ENCODE measurements at regions of chr4 and their contacts with region 1.

Region 1: DNA sequence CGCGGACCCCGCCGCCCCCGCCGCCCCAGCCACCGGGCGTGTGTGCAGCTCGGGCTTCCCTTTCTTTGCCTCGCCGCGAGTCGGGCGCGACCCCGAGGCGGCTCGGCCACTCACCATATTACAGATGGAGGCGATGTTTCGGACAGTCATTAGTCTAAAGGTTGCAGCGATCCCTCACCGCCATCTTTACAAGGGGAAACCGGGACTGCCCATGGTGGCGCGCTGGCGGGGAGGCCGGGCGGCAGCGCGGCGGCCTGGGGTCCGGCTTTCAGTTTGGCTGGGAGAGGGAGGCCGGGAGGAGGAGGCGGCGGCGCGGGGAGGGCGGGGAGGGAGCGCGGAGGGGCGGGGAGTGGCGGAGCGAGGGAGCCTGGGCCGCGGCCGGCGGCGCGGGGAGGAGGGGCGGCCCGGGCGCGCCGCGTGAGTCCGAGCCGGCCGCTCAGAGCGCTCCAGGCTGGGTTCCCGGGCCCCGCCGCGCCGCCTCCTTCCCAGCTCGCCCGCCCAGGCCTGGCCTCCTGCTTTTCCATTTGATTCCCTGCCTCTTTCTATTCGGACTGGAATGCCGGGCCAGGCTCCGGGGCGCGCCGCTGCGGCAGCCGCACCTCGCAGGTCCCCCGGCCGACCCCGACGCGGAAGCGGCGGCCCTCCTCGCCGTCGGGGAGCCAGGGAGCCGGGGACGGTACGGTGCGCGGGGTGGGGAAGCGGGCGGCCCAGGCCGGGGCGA is at the start of gene USP46:
- DNase-seq: no peak
- ATAC-seq: peak; percentile 91
- H3K4me3 ChIP-seq: peak within 1 kb of the TSS; percentile 87
- H3K27ac ChIP-seq: peak within 1 kb of the TSS; percentile 81
- H3K4me1 ChIP-seq: peaks cover 6% of the 10 kb centered on the region; the same call in 1 of the 2 replicates
- H3K27me3 ChIP-seq: no peaks in the 10 kb centered on the region
- CTCF ChIP-seq: no peak
- EP300 ChIP-seq: no peak
- POLR2A ChIP-seq: peak; percentile 84
- RAD21 ChIP-seq: no peak
- polyA plus RNA-seq, gene USP46: 5.3 TPM

Region 2: DNA sequence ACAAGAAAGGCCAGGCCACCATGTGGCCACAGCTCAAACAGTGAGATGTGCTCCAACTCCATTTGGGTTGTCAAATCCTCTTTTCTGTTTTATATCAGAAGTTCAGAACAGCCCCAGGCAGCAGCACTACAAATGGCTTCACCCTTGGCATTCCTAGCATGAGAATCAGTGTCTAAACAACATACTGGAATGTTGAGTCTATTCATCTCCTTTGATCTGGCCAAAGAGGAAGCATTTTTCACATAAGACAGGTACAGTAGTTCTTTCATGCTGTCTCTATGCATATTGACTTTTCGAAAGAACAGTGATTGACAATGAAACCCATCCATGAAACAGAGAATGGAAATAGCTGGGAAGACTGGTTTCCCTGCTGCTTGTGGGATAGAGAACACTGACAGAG is 289.5 kb before region 1 on chr4:
- CTCF ChIA-PET with region 1: no interaction called
- POLR2A ChIA-PET with region 1: no interaction called
- RAD21 ChIA-PET with region 1: interaction called, 3 read pairs
- SMC1A ChIA-PET with region 1: no interaction called
- in situ Hi-C with region 1: loop called (anchors 5 kb)
- intact Hi-C with region 1: no loop called
- DNase-seq: no peak
- ATAC-seq: no peak
- H3K4me3 ChIP-seq: no peak overlapping the region
- H3K27ac ChIP-seq: no peak overlapping the region
- H3K4me1 ChIP-seq: no peaks in the 10 kb centered on the region
- H3K27me3 ChIP-seq: no peaks in the 10 kb centered on the region
- CTCF ChIP-seq: no peak
- EP300 ChIP-seq: no peak
- POLR2A ChIP-seq: no peak
- RAD21 ChIP-seq: no peak

Region 3: GRCh38 chr4:52545099-52546069 is 113.8 kb before region 1 on chr4:
- CTCF ChIA-PET with region 1: interaction called, 50 read pairs
- POLR2A ChIA-PET with region 1: interaction called, 3 read pairs
- RAD21 ChIA-PET with region 1: interaction called, 25 read pairs
- SMC1A ChIA-PET with region 1: interaction called, 52 read pairs
- in situ Hi-C with region 1: no loop called
- intact Hi-C with region 1: loop called (anchors 2 kb)
- DNase-seq: peak; percentile 7
- ATAC-seq: peak; percentile 91
- H3K4me3 ChIP-seq: no peak overlapping the region
- H3K27ac ChIP-seq: no peak overlapping the region
- H3K4me1 ChIP-seq: no peaks in the 10 kb centered on the region
- H3K27me3 ChIP-seq: no peaks in the 10 kb centered on the region
- CTCF ChIP-seq: peak; percentile 93 to 96 (median 95)
- EP300 ChIP-seq: no peak
- POLR2A ChIP-seq: no peak
- RAD21 ChIP-seq: peak; percentile 93

Region 4: DNA sequence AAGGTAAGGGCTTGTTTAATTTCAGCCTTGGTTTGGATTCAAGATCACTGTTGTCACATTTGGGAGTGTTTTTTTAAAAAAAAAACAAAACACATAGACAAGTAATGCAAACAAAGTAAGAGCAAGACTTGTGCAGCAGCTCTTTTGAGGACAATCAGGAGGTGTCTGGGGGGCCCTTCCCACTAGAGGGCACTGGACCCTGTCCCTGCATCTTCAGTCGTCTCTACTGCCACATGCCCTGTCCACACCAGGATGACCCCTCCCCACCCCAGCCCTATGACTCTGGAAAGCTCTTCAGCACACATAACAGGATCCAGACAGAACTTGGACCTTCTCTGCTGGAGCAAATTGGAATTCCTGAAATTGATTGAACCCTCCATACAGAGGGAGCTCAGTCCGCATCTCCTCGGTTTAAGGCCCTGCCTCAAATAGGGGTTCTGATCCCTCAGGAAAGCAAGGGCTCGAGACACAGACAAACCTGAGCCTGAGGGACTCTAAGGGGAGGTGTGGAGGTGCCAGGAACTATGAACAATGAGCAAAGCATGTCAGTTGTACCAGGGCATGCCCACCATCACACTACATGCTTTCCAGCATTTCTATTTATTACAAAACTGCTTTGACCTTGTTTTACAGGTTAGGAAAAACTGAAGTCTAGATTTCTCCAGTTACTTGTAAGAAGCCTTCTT is 70.9 kb before region 1 on chr4:
- CTCF ChIA-PET with region 1: interaction called, 29 read pairs
- POLR2A ChIA-PET with region 1: no interaction called
- RAD21 ChIA-PET with region 1: interaction called, 16 read pairs
- SMC1A ChIA-PET with region 1: interaction called, 9 read pairs
- in situ Hi-C with region 1: no loop called
- intact Hi-C with region 1: no loop called
- DNase-seq: no peak
- ATAC-seq: peak; percentile 92
- H3K4me3 ChIP-seq: no peak overlapping the region
- H3K27ac ChIP-seq: no peak overlapping the region
- H3K4me1 ChIP-seq: no peaks in the 10 kb centered on the region
- H3K27me3 ChIP-seq: no peaks in the 10 kb centered on the region
- CTCF ChIP-seq: peak; percentile 54 to 69 (median 56)
- EP300 ChIP-seq: no peak
- POLR2A ChIP-seq: no peak
- RAD21 ChIP-seq: peak; percentile 68

Region 5: DNA sequence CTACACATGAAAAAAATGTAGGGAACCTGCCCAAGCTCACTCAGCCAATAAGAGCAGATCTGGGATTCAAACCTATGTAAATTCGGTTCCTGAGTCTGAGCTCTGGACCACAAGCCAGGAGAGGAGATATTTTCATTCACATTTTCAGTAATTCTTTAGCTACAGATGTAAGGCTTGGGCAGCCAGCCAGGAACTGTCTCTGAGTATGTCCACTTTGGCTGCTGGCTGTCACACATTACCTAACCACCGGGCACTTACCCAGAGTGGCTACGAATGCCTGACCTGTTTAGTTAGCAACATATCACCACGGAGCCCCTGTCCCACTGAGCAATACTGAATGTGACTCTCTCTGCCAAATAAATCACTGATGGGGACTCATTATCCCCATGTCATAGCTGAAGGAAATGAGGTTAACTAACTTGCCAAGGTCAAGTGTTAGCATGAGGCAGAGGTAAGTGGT is 15.3 kb before region 1 on chr4:
- CTCF ChIA-PET with region 1: interaction called, 7 read pairs
- POLR2A ChIA-PET with region 1: interaction called, 30 read pairs
- RAD21 ChIA-PET with region 1: interaction called, 8 read pairs
- SMC1A ChIA-PET with region 1: interaction called, 15 read pairs
- in situ Hi-C with region 1: no loop called
- intact Hi-C with region 1: no loop called
- DNase-seq: no peak
- ATAC-seq: peak; percentile 54
- H3K4me3 ChIP-seq: peak overlapping the region; percentile 1; the same call in 1 of the 2 replicates
- H3K27ac ChIP-seq: peak overlapping the region; percentile 61
- H3K4me1 ChIP-seq: peaks cover 52% of the 10 kb centered on the region
- H3K27me3 ChIP-seq: no peaks in the 10 kb centered on the region
- CTCF ChIP-seq: no peak
- EP300 ChIP-seq: no peak
- POLR2A ChIP-seq: no peak
- RAD21 ChIP-seq: no peak

Region 6: DNA sequence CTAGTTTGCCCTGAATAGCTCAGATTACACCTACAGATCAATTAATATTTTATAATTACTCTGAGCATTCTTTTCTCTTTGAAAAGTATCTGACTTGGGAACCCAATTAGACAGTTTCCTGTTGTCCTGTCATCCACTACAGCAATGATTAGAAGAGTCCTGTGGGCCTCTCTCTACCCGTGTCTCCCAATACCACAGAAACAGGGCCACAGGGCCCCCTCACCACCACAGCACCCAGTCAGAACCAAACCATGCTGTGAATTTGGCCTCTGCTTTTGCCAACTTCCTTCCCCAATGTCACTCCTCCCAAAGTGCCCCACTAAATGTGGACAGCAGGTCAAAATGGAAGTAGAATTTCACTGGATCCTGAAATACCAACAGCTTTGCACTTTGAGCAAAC is 10.3 kb before region 1 on chr4:
- CTCF ChIA-PET with region 1: interaction called, 7 read pairs
- POLR2A ChIA-PET with region 1: interaction called, 30 read pairs
- RAD21 ChIA-PET with region 1: interaction called, 8 read pairs
- SMC1A ChIA-PET with region 1: interaction called, 15 read pairs
- in situ Hi-C with region 1: no loop called
- intact Hi-C with region 1: no loop called
- DNase-seq: no peak
- ATAC-seq: 0 out of 3 replicates have a peak, but pooled peaks have one; percentile 12
- H3K4me3 ChIP-seq: no peak overlapping the region
- H3K27ac ChIP-seq: no peak overlapping the region
- H3K4me1 ChIP-seq: peaks cover 20% of the 10 kb centered on the region
- H3K27me3 ChIP-seq: no peaks in the 10 kb centered on the region
- CTCF ChIP-seq: no peak
- EP300 ChIP-seq: no peak
- POLR2A ChIP-seq: no peak
- RAD21 ChIP-seq: no peak

Region 7: DNA sequence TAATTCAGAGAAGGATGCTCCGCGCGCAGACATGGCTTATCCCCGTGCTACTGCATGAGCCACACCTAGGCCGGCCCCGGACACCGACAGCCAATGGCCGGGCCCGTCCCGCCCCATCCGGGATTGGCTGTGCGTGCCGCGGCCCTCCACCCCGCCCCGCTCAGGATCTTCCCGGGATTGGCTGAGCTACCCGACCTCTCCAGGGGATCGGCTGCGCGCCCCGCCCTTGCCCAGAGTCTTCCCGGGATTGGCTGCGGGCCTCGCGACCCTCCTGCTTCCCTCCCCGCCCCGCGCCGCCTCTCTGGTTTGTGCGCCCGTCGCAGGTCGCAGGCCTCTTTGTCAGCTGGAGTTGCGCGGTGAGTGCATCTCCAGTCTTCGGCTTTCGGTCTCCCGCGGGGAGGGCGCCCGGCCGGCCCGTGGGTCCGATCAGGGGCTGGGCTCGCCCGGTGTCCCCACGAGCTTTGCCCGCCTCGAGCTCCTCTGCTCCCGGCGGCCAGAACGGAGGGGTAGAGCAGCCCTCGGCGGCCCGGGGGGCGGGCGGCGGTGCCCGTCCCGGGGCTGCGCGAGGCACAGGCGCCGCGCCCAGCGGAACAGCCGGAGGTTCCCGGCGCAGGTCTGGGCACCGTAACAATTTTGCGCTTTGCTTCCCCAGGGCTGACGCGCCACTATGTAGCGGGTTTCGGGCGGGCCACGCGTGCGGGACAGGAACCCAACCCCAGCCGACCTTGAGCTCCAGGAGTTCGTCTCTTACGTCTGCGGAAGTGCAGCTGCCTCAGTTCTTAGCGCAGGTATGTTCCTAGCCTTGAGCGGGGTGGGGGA is 53.2 kb after region 1 on chr4:
- CTCF ChIA-PET with region 1: no interaction called
- POLR2A ChIA-PET with region 1: interaction called, 9 read pairs
- RAD21 ChIA-PET with region 1: interaction called, 3 read pairs
- SMC1A ChIA-PET with region 1: interaction called, 4 read pairs
- in situ Hi-C with region 1: no loop called
- intact Hi-C with region 1: loop called (anchors 5 kb)
- DNase-seq: peak; percentile 85
- ATAC-seq: peak; percentile 93
- H3K4me3 ChIP-seq: peak overlapping the region; percentile 93
- H3K27ac ChIP-seq: peak overlapping the region; percentile 93
- H3K4me1 ChIP-seq: peaks cover 40% of the 10 kb centered on the region
- H3K27me3 ChIP-seq: no peaks in the 10 kb centered on the region
- CTCF ChIP-seq: no peak
- EP300 ChIP-seq: 0 out of 4 replicates have a peak, but pooled peaks of 1 of the 2 experiments have one; percentile 16
- POLR2A ChIP-seq: peak; percentile 99
- RAD21 ChIP-seq: no peak

Measured in GM12878 (cell line).